Activated T-helper 1 cell treated with anti-CD3 and anti-CD28 coated beads, Interleukin-12 subunit alpha, Interleukin-12 subunit beta, Interleukin-2, Interleukin-4 antibody, amounts not matched to agents 30 ng/mL and 10 ng/mL and 1 ng/mL, durations not matched to agents 14 hours and 24 hours and 36 hours (primary cell): ENCODE measurements at regions of chr12 and their contacts with region 1.

Region 1: DNA sequence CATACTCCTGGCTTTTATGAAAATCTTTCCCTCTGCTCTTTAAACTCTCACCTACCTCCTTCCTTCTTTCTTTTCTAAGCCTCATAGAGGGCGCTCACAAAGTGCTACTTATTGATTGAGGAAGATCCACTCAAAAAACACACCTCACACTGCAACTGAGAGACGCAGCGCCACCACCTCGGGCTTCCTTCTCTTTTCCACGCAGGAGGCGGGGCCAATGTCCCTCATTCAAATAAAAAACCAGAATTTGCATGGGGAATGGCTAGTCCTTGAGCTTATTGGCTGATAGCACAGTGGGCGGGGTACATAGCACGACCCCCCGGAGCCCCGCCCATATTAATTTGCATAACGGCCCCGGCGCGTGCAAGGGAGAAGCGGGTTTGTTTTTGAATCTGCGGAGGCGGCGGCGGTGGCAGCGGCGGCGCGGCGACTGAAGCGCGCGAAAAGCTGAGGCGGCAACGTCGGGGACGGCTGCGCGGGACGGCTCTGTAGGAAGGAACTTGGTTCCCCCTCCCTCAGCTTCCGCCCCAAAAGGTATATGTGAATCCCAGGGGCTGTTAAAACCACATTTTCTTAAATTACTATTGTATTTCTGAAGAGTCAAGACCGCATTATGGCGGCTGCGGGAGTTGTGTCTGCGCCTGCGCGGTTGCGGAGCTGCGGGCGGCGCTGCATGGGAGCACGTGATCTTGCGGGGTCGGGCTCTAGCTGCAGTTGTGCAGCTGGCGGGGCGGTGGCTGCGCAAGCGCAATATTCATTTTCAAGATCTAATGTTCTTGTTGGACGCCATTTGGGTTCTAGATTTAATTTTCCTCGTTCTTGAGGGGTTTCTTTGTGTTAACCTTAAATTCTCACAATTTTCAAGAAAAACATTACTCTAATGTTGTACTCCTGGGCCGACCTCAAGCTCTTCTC is at the start of gene ATF7IP:
- DNase-seq: peak; percentile 96
- H3K4me3 Mint-ChIP-seq: peak within 1 kb of the TSS; percentile 85
- H3K27ac Mint-ChIP-seq: peak within 1 kb of the TSS; percentile 98
- H3K4me1 Mint-ChIP-seq: peaks cover 46% of the 10 kb centered on the region
- H3K27me3 Mint-ChIP-seq: no peaks in the 10 kb centered on the region
- total RNA-seq, gene ATF7IP: 66.4 and 71.6 TPM in 2 replicates

Region 2: DNA sequence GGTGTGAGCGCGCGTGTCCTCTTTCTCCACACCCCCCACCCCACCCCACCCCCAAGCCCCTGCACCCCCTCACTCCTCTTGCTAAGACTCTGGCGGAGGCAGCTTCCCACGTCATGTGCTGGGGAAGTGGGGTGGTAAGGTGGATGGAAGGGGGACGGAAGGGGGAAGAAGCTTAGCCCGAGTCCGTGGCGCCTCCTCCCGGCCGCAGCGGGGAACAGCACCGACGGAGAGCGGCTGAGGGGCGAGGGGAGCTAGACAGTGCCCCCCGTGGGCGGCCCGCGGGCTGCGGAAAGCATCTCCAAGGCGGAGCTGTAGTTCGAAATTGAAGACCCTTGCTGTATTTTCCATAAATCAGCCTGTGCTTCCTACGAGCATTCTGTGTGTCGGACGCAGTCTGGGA is 383.6 kb before region 1 on chr12:
- intact Hi-C with region 1: no loop called
- DNase-seq: no peak
- H3K4me3 Mint-ChIP-seq: no peak overlapping the region
- H3K27ac Mint-ChIP-seq: no peak overlapping the region
- H3K4me1 Mint-ChIP-seq: no peaks in the 10 kb centered on the region
- H3K27me3 Mint-ChIP-seq: peaks cover 40% of the 10 kb centered on the region

Region 3: GRCh38 chr12:14185427-14186192 is 179.9 kb before region 1 on chr12:
- intact Hi-C with region 1: loop called (anchors 1 kb)
- DNase-seq: peak; percentile 3
- H3K4me3 Mint-ChIP-seq: no peak overlapping the region
- H3K27ac Mint-ChIP-seq: no peak overlapping the region
- H3K4me1 Mint-ChIP-seq: no peaks in the 10 kb centered on the region
- H3K27me3 Mint-ChIP-seq: peaks cover 4% of the 10 kb centered on the region

Region 4: DNA sequence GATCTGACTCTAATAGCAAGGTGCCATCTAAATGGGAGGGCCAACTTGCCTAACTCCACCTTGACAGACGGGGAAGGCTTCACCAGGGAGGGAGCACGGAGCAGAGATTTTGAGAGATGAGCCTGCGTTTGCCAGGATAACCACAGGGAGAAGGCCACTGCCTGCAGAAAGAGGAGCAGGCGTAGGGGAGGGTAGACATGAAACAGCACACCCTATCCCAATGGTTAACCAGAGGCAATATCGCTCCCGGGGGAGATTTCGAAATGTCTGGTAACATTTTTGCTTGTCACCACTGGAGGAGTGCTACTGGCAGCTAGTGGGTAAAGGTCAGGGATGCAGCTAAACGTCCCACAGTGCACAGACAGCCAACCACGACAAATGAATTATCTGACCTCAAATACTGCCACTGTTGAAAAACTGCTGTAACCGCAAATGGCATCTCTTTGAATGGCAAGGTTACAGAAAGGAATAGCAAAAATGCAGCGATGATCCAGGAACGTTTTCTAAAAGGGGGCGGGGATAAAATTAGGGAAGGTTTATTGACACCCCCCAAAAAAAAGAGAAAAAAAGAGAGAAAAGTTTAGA is 126.1 kb before region 1 on chr12:
- intact Hi-C with region 1: loop called (anchors 1 kb)
- DNase-seq: no peak
- H3K4me3 Mint-ChIP-seq: peak overlapping the region; percentile 74
- H3K27ac Mint-ChIP-seq: peak overlapping the region; percentile 73
- H3K4me1 Mint-ChIP-seq: peaks cover 22% of the 10 kb centered on the region
- H3K27me3 Mint-ChIP-seq: no peaks in the 10 kb centered on the region

Region 5: GRCh38 chr12:14278294-14278953 is 87.1 kb before region 1 on chr12:
- intact Hi-C with region 1: loop called (anchors 5 kb)
- DNase-seq: no peak
- H3K4me3 Mint-ChIP-seq: no peak overlapping the region
- H3K27ac Mint-ChIP-seq: no peak overlapping the region
- H3K4me1 Mint-ChIP-seq: peaks cover 10% of the 10 kb centered on the region
- H3K27me3 Mint-ChIP-seq: no peaks in the 10 kb centered on the region

Region 6: GRCh38 chr12:14394317-14395073 is 28.9 kb after region 1 on chr12:
- intact Hi-C with region 1: loop called (anchors 1 kb)
- DNase-seq: peak; percentile 38
- H3K4me3 Mint-ChIP-seq: peak overlapping the region; percentile 64
- H3K27ac Mint-ChIP-seq: peak overlapping the region; percentile 89
- H3K4me1 Mint-ChIP-seq: peaks cover 87% of the 10 kb centered on the region
- H3K27me3 Mint-ChIP-seq: no peaks in the 10 kb centered on the region

Region 7: GRCh38 chr12:14454098-14454907 is 88.8 kb after region 1 on chr12:
- intact Hi-C with region 1: loop called (anchors 1 kb)
- DNase-seq: peak; percentile 34
- H3K4me3 Mint-ChIP-seq: peak overlapping the region; percentile 46
- H3K27ac Mint-ChIP-seq: peak overlapping the region; percentile 84
- H3K4me1 Mint-ChIP-seq: peaks cover 54% of the 10 kb centered on the region
- H3K27me3 Mint-ChIP-seq: no peaks in the 10 kb centered on the region

Region 8: DNA sequence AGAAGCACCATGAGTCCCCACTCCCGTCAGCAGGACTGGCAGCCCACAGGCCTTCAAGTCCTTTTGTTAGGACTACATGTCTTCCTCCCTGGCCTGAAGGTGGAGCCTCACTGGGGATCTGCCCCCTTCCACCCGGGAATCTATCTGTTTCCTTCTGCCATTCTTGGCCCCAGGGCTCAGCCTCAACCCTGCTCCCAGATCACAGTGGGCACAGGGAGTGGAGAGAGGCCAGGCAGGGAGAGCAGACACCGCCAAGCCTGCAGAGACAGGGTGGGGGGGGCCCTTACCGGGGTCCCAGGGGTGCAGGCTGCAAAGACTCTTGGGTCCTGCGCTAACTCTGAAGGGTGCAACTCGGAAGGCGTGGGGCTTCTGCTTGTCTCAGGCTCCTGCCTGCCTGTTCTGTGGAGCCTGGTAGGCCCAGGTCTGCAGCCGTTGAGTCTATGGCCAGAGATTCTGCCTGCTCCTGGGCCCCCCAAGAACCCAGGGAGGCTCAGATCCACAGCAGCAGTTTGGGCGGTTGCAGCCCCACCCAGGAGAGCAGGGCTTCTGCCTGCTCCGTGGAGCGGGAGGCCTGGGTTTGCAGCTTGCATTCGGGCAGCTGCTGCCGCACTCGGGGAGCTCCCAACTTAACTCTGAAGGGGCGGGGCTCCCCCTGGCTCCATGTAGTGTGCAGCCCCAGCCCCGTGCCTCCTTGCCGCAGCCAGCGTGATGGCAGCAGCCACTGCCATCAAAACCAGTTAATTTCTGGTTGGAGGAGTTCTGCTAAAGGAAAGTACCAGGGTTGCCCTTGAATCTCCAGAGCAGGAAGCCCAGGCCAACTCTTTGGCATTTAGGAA is 223.8 kb after region 1 on chr12:
- intact Hi-C with region 1: no loop called
- DNase-seq: no peak
- H3K4me3 Mint-ChIP-seq: no peak overlapping the region
- H3K27ac Mint-ChIP-seq: no peak overlapping the region
- H3K4me1 Mint-ChIP-seq: no peaks in the 10 kb centered on the region
- H3K27me3 Mint-ChIP-seq: no peaks in the 10 kb centered on the region

Region 9: GRCh38 chr12:14960548-14961465 is 595.3 kb after region 1 on chr12:
- intact Hi-C with region 1: loop called (anchors 5 kb)
- DNase-seq: peak; percentile 34
- H3K4me3 Mint-ChIP-seq: peak overlapping the region; percentile 97
- H3K27ac Mint-ChIP-seq: peak overlapping the region; percentile 97
- H3K4me1 Mint-ChIP-seq: peaks cover 68% of the 10 kb centered on the region
- H3K27me3 Mint-ChIP-seq: no peaks in the 10 kb centered on the region